ENCODE measurements at regions of chr20 and their contacts with region 1.

Region 1: DNA sequence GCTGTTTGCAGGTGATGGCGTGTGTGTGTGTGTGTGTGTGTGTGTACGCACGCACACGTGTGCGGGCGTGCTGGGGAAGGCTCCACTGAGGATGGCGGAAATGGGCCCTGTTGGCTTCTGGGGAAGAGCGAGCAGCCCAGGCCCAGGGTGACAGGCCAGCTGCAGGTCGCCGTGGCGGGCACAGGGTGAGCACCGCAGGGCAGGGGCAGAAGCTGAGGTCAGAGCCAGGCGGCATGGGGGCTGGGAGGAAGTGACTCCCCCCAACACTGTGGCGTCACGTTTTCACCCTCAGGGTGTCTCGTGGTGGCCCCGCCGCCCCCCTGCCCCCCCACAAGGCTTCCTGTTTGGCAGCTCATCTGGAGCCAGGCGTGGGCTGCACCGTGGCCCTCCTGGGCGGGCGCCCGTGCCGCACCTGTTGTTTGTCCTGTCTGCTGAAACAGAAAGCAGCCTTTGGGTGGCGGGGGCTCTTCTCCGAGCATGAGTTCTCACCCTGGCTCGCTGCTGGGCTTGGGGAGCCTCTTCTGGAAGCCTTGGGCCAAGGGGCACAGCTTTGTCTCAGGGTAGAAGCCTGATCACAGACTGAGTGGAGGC is 7.1 kb downstream of the RBM38 start:
- DNase-seq: peak; percentile 83 to 97 (median 94)
- ATAC-seq: peak; percentile 71
- H3K4me3 ChIP-seq: peak overlapping the region; percentile 54
- H3K4me3 Mint-ChIP-seq: peak overlapping the region; percentile 85
- H3K27ac ChIP-seq: peak overlapping the region; percentile 90 to 99
- H3K27ac Mint-ChIP-seq: peak overlapping the region; percentile 96
- H3K4me1 ChIP-seq: peaks cover 100% of the 10 kb centered on the region
- H3K4me1 Mint-ChIP-seq: peaks cover 95% of the 10 kb centered on the region
- H3K27me3 ChIP-seq: no peaks in the 10 kb centered on the region
- H3K27me3 Mint-ChIP-seq: peaks cover 4% of the 10 kb centered on the region
- CTCF ChIP-seq: no peak

Region 2: DNA sequence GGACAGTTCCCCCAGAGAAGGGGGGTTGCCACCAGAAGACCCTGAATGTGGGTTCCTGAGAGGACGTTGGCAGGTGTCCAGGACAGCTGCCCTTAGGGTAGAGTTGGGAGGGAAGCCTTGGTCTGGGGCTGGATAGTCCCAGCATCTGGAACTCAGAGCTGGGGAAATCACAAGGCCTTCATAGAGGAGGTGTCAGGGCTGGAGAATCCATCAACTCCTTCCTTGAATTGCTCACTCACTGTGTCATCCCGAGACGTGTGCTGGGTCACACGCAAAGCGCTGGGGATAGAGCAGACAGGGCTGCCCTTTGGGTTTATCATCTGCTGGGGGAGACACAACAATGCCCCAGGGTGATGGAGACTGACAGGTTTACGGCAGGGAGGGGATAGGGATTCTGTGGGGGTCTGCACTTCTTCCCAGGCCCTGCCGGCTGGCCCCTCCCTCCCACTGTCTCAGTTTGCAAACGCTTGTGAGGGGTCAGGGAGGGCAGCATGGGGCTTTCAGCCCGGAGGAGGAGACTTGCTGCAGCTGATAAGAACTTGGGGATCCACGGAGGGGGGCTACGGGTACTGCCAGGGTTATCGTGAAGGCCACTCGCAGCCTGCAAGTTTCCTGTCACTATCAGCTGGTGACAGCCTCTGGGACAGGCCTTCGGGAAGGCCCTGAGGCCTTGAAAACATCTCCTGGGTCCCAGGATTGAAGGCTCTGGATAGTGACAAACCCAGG is 11.5 kb after region 1 on chr20:
- CTCF ChIA-PET with region 1: interaction called, 3 read pairs
- POLR2A ChIA-PET with region 1: interaction called, 46 read pairs
- intact Hi-C with region 1: no loop called
- DNase-seq: no peak
- ATAC-seq: no peak
- H3K4me3 ChIP-seq: no peak overlapping the region
- H3K4me3 Mint-ChIP-seq: peak overlapping the region; percentile 71
- H3K27ac ChIP-seq: no peak overlapping the region
- H3K27ac Mint-ChIP-seq: peak overlapping the region; percentile 96
- H3K4me1 ChIP-seq: peaks cover 35% of the 10 kb centered on the region
- H3K4me1 Mint-ChIP-seq: peaks cover 25% of the 10 kb centered on the region
- H3K27me3 ChIP-seq: no peaks in the 10 kb centered on the region
- H3K27me3 Mint-ChIP-seq: no peaks in the 10 kb centered on the region
- CTCF ChIP-seq: no peak

Region 3: DNA sequence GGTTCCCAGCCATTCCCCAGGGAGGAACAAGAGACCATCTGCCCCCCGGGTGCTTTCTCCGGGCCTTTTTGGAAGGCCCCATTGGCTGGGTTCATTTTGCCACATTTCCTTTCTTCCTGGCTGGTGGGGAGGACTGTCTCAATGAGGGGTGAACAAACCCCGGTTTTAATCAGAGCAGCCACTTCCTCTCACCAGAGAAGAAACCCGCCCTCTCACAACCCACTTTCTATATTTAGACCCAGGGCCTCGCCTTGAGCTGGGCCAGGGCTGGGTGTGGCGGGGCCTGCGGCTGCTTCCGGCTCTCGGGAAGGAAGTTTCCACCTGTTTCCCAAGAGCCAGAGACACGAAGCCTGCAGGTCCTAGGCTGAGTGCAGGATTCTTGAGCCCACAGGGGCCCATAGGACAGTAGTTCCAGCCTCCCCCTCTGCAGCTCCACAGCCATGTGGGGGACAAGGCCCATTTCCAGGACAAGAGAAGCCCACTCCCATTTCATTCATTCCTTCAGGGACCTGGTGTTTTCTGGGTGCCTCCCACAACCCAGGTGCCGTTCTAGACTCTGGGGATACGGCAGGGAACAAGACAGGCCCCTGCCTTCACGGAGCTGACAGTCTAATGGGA is 34.7 kb after region 1 on chr20:
- CTCF ChIA-PET with region 1: interaction called, 5 read pairs
- POLR2A ChIA-PET with region 1: interaction called, 150 read pairs
- intact Hi-C with region 1: loop called (anchors 2 kb)
- DNase-seq: peak in 13 of 14 experiments; percentile 30 to 94 (median 64)
- ATAC-seq: peak; percentile 89
- H3K4me3 ChIP-seq: no peak overlapping the region
- H3K4me3 Mint-ChIP-seq: peak overlapping the region; percentile 81
- H3K27ac ChIP-seq: peak overlapping the region; percentile 56 to 72
- H3K27ac Mint-ChIP-seq: peak overlapping the region; percentile 88
- H3K4me1 ChIP-seq: peaks cover 79% of the 10 kb centered on the region
- H3K4me1 Mint-ChIP-seq: peaks cover 67% of the 10 kb centered on the region
- H3K27me3 ChIP-seq: no peaks in the 10 kb centered on the region
- H3K27me3 Mint-ChIP-seq: no peaks in the 10 kb centered on the region
- CTCF ChIP-seq: no peak

Region 4: DNA sequence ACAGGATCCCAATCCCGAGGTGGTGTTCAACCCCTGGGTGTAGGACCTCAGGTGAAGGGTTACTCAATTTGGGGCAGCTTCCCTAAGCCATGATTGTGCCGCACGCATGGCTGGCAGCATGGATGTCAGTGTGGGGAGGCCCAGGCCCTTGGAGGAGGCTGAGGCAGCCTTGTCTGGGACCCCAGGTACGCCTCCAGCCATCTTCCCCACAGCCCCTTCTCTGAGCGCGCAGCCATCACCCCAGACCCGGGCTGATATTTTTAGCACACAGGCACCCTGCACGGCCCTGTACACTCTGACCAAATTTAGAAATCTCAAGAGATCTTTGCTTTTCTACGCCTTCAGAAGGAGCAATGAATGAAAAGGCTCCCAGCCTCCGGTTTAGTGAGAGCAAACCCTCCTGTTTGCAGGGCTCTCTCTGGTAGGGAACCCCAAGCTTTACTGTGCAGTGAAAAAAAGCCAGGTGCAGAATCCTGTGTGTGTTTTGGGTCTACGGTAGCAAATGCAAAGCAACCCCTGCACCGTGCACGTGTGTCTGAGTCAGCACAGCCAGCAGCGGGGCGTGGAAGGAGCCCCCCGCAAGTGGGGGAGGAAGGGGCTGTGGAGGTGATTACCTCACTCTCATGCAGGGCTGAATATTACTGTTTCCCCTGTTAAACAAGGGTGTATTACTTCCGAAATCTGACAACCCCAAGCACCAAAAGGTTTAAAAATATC is 82.3 kb after region 1 on chr20:
- CTCF ChIA-PET with region 1: no interaction called
- POLR2A ChIA-PET with region 1: interaction called, 13 read pairs
- intact Hi-C with region 1: no loop called
- DNase-seq: peak in 10 of 14 experiments; percentile 13 to 66 (median 34)
- ATAC-seq: peak; percentile 93
- H3K4me3 ChIP-seq: no peak overlapping the region
- H3K4me3 Mint-ChIP-seq: peak overlapping the region; percentile 48
- H3K27ac ChIP-seq: no peak overlapping the region
- H3K27ac Mint-ChIP-seq: peak overlapping the region; percentile 79
- H3K4me1 ChIP-seq: peaks cover 32% of the 10 kb centered on the region
- H3K4me1 Mint-ChIP-seq: peaks cover 34% of the 10 kb centered on the region
- H3K27me3 ChIP-seq: no peaks in the 10 kb centered on the region
- H3K27me3 Mint-ChIP-seq: no peaks in the 10 kb centered on the region
- CTCF ChIP-seq: no peak

Region 5: GRCh38 chr20:57628047-57628961 is 230.0 kb after region 1 on chr20:
- CTCF ChIA-PET with region 1: no interaction called
- POLR2A ChIA-PET with region 1: interaction called, 13 read pairs
- intact Hi-C with region 1: loop called in 1 of 2 experiments (anchors 5 kb)
- DNase-seq: peak in 13 of 14 experiments; percentile 43 to 88 (median 62)
- ATAC-seq: peak; percentile 79
- H3K4me3 ChIP-seq: peak overlapping the region; percentile 40
- H3K4me3 Mint-ChIP-seq: peak overlapping the region; percentile 83
- H3K27ac ChIP-seq: peak overlapping the region; percentile 80 to 88
- H3K27ac Mint-ChIP-seq: peak overlapping the region; percentile 94
- H3K4me1 ChIP-seq: peaks cover 43% of the 10 kb centered on the region
- H3K4me1 Mint-ChIP-seq: peaks cover 90% of the 10 kb centered on the region
- H3K27me3 ChIP-seq: no peaks in the 10 kb centered on the region
- H3K27me3 Mint-ChIP-seq: no peaks in the 10 kb centered on the region
- CTCF ChIP-seq: no peak

Region 6: DNA sequence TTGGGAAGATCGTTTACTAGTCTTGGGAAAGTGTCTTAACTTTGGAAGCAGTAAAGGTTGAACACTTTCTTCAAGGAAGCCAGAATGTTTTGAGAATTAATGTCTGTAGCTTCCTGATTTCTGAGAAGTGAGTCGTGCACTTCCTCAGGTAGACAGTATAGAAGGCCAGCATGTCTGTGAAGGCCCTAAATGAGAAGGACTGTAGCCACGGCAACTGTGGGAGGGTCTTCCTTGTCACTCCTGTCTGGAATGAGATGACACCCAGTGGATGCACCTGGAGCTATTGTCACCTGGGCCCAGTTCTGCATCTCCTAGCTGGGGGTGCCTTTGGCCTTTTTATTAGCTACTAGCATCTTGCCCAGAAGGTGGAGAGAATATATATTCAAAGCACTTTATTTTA is 1261.5 kb after region 1 on chr20:
- CTCF ChIA-PET with region 1: no interaction called
- POLR2A ChIA-PET with region 1: no interaction called
- intact Hi-C with region 1: loop called in 1 of 2 experiments (anchors 5 kb)
- DNase-seq: peak in 5 of 14 experiments; percentile 13 to 40 (median 35)
- ATAC-seq: no peak
- H3K4me3 ChIP-seq: peak overlapping the region; percentile 34
- H3K4me3 Mint-ChIP-seq: peak overlapping the region; percentile 82
- H3K27ac ChIP-seq: peak overlapping the region; percentile 89 to 92
- H3K27ac Mint-ChIP-seq: peak overlapping the region; percentile 98
- H3K4me1 ChIP-seq: peaks cover 55% of the 10 kb centered on the region
- H3K4me1 Mint-ChIP-seq: peaks cover 90% of the 10 kb centered on the region
- H3K27me3 ChIP-seq: no peaks in the 10 kb centered on the region
- H3K27me3 Mint-ChIP-seq: no peaks in the 10 kb centered on the region
- CTCF ChIP-seq: no peak

Measured in CD4-positive, alpha-beta T cell (primary cell).